ENCODE measurements at regions of chr2 and their contacts with region 1.

Region 1: GRCh38 chr2:96336104-96336775 is 674 bp downstream of the NCAPH start:
- DNase-seq: peak; percentile 23
- H3K4me3 ChIP-seq: peak overlapping the region; percentile 84
- H3K27ac ChIP-seq: peak overlapping the region; percentile 85
- H3K4me1 ChIP-seq: peaks cover 24% of the 10 kb centered on the region
- CTCF ChIP-seq: no peak

Region 2: GRCh38 chr2:95760806-95761530 is 575.3 kb before region 1 on chr2:
- CTCF ChIA-PET with region 1: no interaction called
- POLR2A ChIA-PET with region 1: no interaction called
- intact Hi-C with region 1: no loop called
- DNase-seq: no peak
- H3K4me3 ChIP-seq: no peak overlapping the region
- H3K27ac ChIP-seq: no peak overlapping the region
- H3K4me1 ChIP-seq: no peaks in the 10 kb centered on the region
- CTCF ChIP-seq: no peak

Region 3: GRCh38 chr2:96305091-96305978 is 30.9 kb before region 1 on chr2 and contains the start of gene SNRNP200:
- CTCF ChIA-PET with region 1: no interaction called
- POLR2A ChIA-PET with region 1: interaction called, 19 read pairs
- intact Hi-C with region 1: loop called (anchors 1 kb)
- DNase-seq: peak; percentile 91
- H3K4me3 ChIP-seq: peak within 1 kb of the TSS; percentile 95
- H3K27ac ChIP-seq: peak within 1 kb of the TSS; percentile 73
- H3K4me1 ChIP-seq: peaks cover 28% of the 10 kb centered on the region
- CTCF ChIP-seq: no peak
- total RNA-seq, gene SNRNP200: 76.0 and 79.3 TPM in 2 replicates